H1 (cell line): ENCODE measurements at regions of chr6 and their contacts with region 1.

Region 1: GRCh38 chr6:99868074-99868702 is 125.8 kb downstream of the MCHR2 start:
- DNase-seq: peak; percentile 31 to 87
- H3K4me3 ChIP-seq: peak overlapping the region in 1 of 4 experiments; percentile 47; a peak in 2 of 8 replicates
- H3K27ac ChIP-seq: no peak overlapping the region
- H3K4me1 ChIP-seq: no peaks in the 10 kb centered on the region
- H3K27me3 ChIP-seq: no peaks in the 10 kb centered on the region
- CTCF ChIP-seq: peak; percentile 81 to 90 (median 82)
- EP300 ChIP-seq: no peak
- POLR2A ChIP-seq: no peak
- RAD21 ChIP-seq: peak; percentile 90

Region 2: DNA sequence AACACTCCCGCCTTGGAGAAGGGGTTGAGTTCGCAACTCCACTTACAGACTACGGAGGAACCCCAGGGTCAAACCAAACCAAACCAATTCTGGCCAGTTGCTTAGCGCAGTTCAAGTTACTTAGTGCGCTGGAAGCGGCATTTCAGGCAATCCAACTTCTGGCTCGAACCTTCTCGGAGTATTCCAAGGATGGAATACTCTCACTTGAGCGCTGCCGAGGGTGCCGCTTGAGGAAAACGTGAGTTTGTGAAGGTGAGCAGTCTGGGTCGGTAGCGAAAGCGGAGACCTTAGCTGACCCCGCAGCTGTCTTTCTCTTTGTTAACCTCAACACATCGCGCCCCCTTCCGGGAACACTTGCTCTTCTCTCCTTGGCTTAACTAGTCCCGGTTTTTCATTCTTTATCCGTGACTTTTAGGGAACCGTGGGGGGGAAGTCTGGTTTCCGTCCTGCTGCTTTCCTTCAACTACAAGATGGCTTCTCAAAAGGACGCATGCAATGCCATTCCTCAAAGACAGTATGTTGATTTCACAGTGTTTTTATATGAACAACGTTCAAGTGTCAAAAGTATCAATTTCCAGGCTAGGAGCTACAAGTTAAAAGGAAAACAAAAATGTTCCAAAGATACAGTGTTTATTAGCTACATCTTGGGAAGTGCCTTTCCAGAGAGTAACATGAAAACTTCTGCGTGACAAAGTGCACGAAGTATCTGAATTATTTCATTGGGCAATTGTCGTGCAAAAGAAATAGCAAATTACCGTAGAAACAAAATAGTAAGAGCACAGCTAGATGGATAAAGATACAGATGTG is 442.3 kb before region 1 on chr6:
- CTCF ChIA-PET with region 1: no interaction called
- POLR2A ChIA-PET with region 1: no interaction called
- DNase-seq: peak; percentile 87 to 90
- H3K4me3 ChIP-seq: peak overlapping the region; percentile 79 to 99 (median 92)
- H3K27ac ChIP-seq: peak overlapping the region; percentile 97
- H3K4me1 ChIP-seq: peaks cover 0 to 11% (median 5%) of the 10 kb centered on the region in 4 experiments; a peak in 4 of 7 replicates
- H3K27me3 ChIP-seq: no peaks in the 10 kb centered on the region
- CTCF ChIP-seq: peak; percentile 37 to 63 (median 44); a peak in 3 of 4 replicates
- EP300 ChIP-seq: peak in 1 of 2 experiments; percentile 85; a peak in 1 of 3 replicates
- POLR2A ChIP-seq: peak in 1 of 2 experiments; percentile 79; a peak in 2 of 3 replicates
- RAD21 ChIP-seq: peak; percentile 34 to 42

Region 3: GRCh38 chr6:99563056-99563723 is 305.0 kb before region 1 on chr6:
- CTCF ChIA-PET with region 1: no interaction called
- POLR2A ChIA-PET with region 1: no interaction called
- DNase-seq: no peak
- H3K4me3 ChIP-seq: no peak overlapping the region
- H3K27ac ChIP-seq: no peak overlapping the region
- H3K4me1 ChIP-seq: peaks cover 0 to 2% (median 0%) of the 10 kb centered on the region in 4 experiments; a peak in 1 of 7 replicates
- H3K27me3 ChIP-seq: no peaks in the 10 kb centered on the region
- CTCF ChIP-seq: no peak
- EP300 ChIP-seq: no peak
- POLR2A ChIP-seq: no peak
- RAD21 ChIP-seq: no peak

Region 4: GRCh38 chr6:99846006-99846405 is 22.2 kb before region 1 on chr6:
- CTCF ChIA-PET with region 1: interaction called, 10 read pairs
- POLR2A ChIA-PET with region 1: no interaction called
- DNase-seq: no peak
- H3K4me3 ChIP-seq: no peak overlapping the region
- H3K27ac ChIP-seq: no peak overlapping the region
- H3K4me1 ChIP-seq: peaks cover 0 to 8% (median under 1%) of the 10 kb centered on the region in 4 experiments; a peak in 1 of 7 replicates
- H3K27me3 ChIP-seq: no peaks in the 10 kb centered on the region; a peak in 2 of 7 replicates
- CTCF ChIP-seq: no peak
- EP300 ChIP-seq: no peak; a peak in 1 of 3 replicates
- POLR2A ChIP-seq: no peak
- RAD21 ChIP-seq: no peak

Region 5: DNA sequence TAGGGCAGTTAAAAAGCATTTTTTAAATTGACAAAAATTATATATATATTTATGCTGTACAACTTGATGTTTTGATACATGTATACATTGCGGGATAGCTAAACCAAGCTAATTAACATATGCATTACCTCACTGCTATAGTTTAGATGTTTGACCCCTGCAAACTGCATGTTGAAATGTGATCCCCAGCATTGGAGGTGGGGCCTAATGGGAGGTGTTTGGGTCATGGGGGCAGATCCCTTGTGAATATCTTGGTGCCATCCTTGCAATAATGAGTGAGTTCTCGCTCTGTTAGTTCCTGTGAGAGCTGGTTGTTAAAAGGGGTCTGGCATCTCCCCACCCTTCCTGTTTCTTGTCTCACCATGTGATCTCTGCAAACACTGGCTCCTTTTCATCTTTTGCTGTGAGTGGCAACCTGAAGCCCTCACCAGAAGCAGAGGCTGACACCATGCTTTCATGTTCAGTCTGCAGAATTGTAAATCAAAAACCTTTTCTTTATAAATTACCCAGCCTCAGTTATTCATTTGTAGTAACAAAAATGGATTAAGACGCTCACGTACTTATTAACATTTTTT is 14.0 kb after region 1 on chr6:
- CTCF ChIA-PET with region 1: interaction called, 27 read pairs
- POLR2A ChIA-PET with region 1: no interaction called
- DNase-seq: no peak
- H3K4me3 ChIP-seq: no peak overlapping the region
- H3K27ac ChIP-seq: no peak overlapping the region
- H3K4me1 ChIP-seq: no peaks in the 10 kb centered on the region
- H3K27me3 ChIP-seq: no peaks in the 10 kb centered on the region
- CTCF ChIP-seq: no peak
- EP300 ChIP-seq: no peak
- POLR2A ChIP-seq: no peak
- RAD21 ChIP-seq: no peak

Region 6: DNA sequence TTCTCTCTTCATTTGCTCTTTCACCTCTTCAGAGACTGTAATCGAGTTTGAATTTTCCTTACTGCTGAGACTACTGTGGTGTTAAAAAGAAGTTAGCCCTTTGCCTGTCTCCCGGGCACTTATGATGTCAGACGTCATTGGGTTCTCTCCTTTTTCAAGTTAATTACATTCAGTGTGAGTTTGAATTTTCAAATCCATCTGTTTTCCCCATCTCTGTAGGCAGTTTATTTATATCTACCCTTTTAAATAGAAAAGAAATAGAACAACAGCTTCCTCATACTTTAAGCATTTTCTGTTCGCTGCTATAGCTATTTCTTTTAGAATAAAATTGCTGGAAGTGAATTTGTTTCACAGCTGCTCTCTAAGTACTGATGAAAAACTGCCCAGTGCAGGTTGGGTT is 44.5 kb after region 1 on chr6:
- CTCF ChIA-PET with region 1: interaction called, 72 read pairs
- POLR2A ChIA-PET with region 1: no interaction called
- DNase-seq: no peak
- H3K4me3 ChIP-seq: no peak overlapping the region
- H3K27ac ChIP-seq: no peak overlapping the region
- H3K4me1 ChIP-seq: no peaks in the 10 kb centered on the region
- H3K27me3 ChIP-seq: no peaks in the 10 kb centered on the region
- CTCF ChIP-seq: no peak
- EP300 ChIP-seq: no peak
- POLR2A ChIP-seq: no peak
- RAD21 ChIP-seq: no peak

Region 7: DNA sequence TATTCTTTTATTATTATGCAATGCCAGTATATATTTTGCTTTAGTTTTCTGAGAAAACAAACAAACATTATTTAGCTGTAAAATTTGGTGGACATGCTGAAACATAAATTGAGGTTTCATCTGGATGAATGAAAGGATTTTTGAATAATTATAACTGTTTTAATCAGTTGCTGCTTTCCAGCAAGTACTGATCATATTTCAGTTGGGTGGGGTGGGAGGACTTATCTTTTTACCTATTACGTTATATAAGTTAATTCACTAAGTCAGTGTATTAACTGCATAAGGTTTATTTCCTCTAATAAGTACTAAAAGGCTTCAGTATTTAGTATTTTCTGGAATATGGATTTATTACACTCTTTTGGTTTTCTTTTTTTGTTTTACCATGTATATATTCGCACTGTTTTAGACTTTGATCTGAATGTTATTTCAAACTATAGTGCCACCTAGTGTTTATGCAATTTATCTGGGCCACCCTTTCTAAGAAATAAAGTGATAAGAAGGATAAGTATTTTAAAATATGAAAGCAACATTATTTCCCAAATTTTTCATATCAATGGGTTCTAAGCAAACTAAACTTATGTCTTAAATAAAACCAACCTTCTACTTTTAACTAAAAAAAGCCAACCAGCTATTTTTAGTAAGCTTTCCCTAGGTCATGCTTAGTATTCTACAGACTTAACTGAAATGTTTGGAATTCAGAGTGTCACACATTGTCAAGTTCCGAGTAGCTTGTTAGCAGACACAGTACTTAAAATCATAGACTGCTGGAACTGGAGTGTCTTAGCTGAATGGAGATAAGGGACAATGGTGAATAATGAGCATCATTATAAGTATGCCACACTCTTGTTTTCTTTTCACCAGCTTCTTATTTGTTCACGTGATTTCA is 231.2 kb after region 1 on chr6:
- CTCF ChIA-PET with region 1: interaction called, 44 read pairs
- POLR2A ChIA-PET with region 1: no interaction called
- DNase-seq: no peak
- H3K4me3 ChIP-seq: no peak overlapping the region
- H3K27ac ChIP-seq: no peak overlapping the region
- H3K4me1 ChIP-seq: no peaks in the 10 kb centered on the region
- H3K27me3 ChIP-seq: no peaks in the 10 kb centered on the region
- CTCF ChIP-seq: peak in 2 of 3 experiments; percentile 18 to 29; a peak in 2 of 4 replicates
- EP300 ChIP-seq: no peak
- POLR2A ChIP-seq: no peak
- RAD21 ChIP-seq: peak in 1 of 2 experiments; percentile 44; a peak in 3 of 4 replicates

Region 8: DNA sequence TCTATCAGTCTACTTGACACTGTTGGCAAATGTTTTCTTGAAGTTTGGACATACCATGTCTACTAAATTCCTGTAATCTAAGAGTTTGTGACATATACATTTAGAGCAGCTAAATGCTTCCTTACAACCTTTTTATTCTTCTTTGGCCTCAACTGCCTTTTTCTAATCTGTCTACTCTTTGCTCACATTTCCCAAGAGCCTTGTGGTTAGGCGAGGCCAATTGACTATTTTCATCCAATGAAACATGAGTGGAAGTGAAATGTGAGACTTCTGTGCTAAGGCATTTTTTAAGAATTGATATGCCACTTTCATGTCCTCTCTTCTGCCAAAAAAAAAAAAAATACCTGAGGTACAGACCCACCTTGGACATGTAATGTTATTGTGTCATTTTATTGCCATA is 284.0 kb after region 1 on chr6:
- CTCF ChIA-PET with region 1: no interaction called
- POLR2A ChIA-PET with region 1: no interaction called
- DNase-seq: no peak
- H3K4me3 ChIP-seq: no peak overlapping the region
- H3K27ac ChIP-seq: no peak overlapping the region
- H3K4me1 ChIP-seq: no peaks in the 10 kb centered on the region
- H3K27me3 ChIP-seq: no peaks in the 10 kb centered on the region
- CTCF ChIP-seq: no peak
- EP300 ChIP-seq: no peak
- POLR2A ChIP-seq: no peak
- RAD21 ChIP-seq: no peak